ENCODE measurements at regions of chr1 and their contacts with region 1.

Region 1: DNA sequence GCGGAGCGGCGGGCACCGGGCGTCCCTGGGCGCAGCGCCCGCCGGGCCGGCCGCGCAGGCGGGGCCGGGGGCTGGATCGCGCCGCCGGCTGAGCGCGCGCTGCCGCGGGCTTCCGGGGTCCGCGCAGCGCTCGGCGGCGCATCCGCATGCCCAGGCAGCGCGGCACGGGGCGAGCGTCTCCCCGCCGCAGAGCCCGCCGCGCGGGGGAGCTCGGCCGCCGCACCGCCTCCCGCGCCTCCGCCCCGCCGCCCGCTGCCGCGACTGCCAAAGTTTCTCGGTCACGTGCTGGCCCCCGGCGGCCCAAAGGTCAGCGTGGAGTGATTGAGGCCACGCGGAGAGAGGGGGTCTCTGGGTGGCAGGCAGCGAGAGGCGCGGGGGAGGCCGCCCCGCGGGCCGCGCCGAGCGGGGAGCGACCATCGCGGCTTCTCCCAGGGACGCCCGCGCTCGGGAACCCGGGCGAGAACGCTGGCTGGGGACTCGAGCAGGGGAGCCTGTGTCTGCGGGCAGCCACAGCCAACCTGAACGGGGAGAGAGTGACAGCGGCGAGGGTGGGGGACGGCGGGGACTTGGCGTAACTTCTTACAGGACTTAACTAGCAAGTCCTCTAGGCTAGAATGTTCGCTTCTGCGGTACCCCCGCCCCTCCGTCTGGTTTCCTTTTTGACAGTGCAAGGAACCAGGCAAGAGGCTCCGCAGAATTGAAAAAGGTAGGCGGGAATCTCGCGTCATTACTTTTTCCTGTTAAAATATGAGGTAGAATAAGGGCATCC is at the start of gene ILDR2:
- DNase-seq: peak; percentile 41
- H3K4me3 Mint-ChIP-seq: peak within 1 kb of the TSS; percentile 94
- H3K27ac Mint-ChIP-seq: peak within 1 kb of the TSS; percentile 80
- H3K4me1 Mint-ChIP-seq: peaks cover 58% of the 10 kb centered on the region
- H3K27me3 Mint-ChIP-seq: peaks cover 28% of the 10 kb centered on the region
- total RNA-seq, gene ILDR2: 11.3 and 14.4 TPM in 2 replicates

Region 2: GRCh38 chr1:166838766-166839599 is 136.6 kb before region 1 on chr1 and contains the start of gene POGK:
- intact Hi-C with region 1: loop called (anchors 2 kb)
- DNase-seq: peak; percentile 84
- H3K4me3 Mint-ChIP-seq: peak within 1 kb of the TSS; percentile 94
- H3K27ac Mint-ChIP-seq: peak within 1 kb of the TSS; percentile 97
- H3K4me1 Mint-ChIP-seq: peaks cover 64% of the 10 kb centered on the region
- H3K27me3 Mint-ChIP-seq: no peaks in the 10 kb centered on the region
- total RNA-seq, gene POGK: 51.4 and 54.1 TPM in 2 replicates

Region 3: DNA sequence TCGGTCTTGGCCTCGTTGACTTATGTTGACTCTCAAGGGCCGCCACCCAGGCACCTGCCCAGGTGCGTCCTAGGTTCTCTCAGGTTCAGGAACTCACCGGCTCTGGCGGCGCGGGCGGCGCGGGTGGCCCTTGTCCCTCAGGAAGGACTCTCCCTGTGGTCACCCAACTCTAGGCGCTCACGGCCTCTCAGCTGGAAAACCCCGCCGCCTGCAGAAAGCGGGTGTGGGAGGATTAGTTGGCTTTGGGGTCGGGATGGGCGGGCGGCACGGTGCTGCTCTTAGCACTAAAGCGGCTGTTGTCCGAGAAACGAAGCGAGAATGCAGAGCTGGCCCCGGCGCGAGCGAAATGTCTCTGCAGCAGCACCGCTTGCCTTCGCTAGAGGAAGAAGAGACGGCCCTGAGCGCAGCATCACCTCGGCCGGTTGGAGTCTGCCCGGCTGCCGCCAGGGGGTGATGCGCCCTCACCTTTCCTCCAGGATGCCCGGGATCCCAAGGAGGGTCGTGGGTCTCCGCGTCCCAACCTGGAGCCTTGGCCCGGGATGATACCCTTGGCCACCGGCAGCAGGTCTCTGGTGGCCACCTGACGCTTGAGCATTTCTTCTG is 91.4 kb before region 1 on chr1:
- intact Hi-C with region 1: no loop called
- DNase-seq: no peak
- H3K4me3 Mint-ChIP-seq: no peak overlapping the region
- H3K27ac Mint-ChIP-seq: no peak overlapping the region
- H3K4me1 Mint-ChIP-seq: peaks cover 12% of the 10 kb centered on the region
- H3K27me3 Mint-ChIP-seq: peaks cover 17% of the 10 kb centered on the region

Region 4: DNA sequence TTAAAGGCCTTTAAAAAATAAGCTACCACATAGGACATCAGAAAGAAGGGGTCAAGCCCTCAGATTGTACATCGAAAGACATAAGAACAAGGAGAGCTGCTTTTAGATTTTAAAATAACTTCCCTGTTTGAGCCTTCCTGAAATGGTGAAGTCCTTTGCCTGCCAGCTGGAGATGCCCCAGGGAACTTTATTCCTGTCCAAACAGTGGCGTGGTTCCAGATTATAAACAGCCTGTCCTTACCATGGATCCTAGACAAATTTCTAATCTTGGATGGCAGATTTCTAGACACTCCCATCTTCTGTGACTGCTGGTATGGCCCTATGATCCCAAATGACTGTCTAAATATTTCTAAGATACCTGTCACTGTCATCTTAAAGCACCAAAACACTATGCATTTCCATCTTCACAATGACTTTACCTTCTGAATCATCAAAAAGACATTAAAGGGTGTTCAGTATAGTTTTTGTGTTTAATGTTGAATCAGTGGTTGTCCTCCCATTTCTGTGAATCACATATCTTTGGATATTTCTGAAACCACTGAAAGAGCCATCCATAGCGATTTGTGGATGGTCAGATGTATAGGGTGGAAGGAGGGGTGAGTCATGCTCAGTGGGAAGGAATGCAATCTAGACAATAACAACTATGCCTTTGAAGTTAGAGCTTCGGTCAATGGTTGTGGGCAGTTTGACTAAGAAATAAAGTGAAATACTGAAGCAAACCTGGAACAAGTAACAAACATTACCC is 23.4 kb before region 1 on chr1:
- intact Hi-C with region 1: loop called (anchors 1 kb)
- DNase-seq: no peak
- H3K4me3 Mint-ChIP-seq: no peak overlapping the region
- H3K27ac Mint-ChIP-seq: peak overlapping the region; percentile 13
- H3K4me1 Mint-ChIP-seq: peaks cover 19% of the 10 kb centered on the region
- H3K27me3 Mint-ChIP-seq: peaks cover 21% of the 10 kb centered on the region

Region 5: DNA sequence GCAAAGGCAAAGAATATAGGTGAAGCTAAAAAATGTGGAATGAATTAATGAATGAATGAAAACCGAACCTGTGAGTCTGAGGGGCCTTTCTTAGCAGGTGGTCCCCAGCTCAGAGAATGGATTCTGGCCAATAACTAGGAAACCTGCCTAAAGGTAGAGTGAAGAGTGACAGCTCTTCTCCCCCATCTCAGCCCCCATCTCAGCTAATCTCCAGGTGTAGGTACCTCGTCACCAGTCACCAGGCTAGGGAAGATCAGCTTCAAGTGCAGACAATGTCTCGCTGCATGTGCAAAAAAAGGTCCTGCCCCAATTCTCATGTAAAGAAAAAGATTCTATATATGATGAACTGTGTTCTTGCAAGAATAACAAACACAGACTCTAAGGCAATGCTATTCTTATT is 11.1 kb before region 1 on chr1:
- intact Hi-C with region 1: loop called (anchors 1 kb)
- DNase-seq: no peak
- H3K4me3 Mint-ChIP-seq: no peak overlapping the region
- H3K27ac Mint-ChIP-seq: no peak overlapping the region
- H3K4me1 Mint-ChIP-seq: peaks cover 10% of the 10 kb centered on the region
- H3K27me3 Mint-ChIP-seq: peaks cover 11% of the 10 kb centered on the region

Region 6: GRCh38 chr1:166999500-167000055 is 24.0 kb after region 1 on chr1:
- intact Hi-C with region 1: no loop called
- DNase-seq: no peak
- H3K4me3 Mint-ChIP-seq: no peak overlapping the region
- H3K27ac Mint-ChIP-seq: no peak overlapping the region
- H3K4me1 Mint-ChIP-seq: peaks cover 16% of the 10 kb centered on the region
- H3K27me3 Mint-ChIP-seq: peaks cover 9% of the 10 kb centered on the region

Region 7: GRCh38 chr1:167033646-167034045 is 58.1 kb after region 1 on chr1:
- intact Hi-C with region 1: no loop called
- DNase-seq: no peak
- H3K4me3 Mint-ChIP-seq: no peak overlapping the region
- H3K27ac Mint-ChIP-seq: no peak overlapping the region
- H3K4me1 Mint-ChIP-seq: no peaks in the 10 kb centered on the region
- H3K27me3 Mint-ChIP-seq: peaks cover 7% of the 10 kb centered on the region

Region 8: DNA sequence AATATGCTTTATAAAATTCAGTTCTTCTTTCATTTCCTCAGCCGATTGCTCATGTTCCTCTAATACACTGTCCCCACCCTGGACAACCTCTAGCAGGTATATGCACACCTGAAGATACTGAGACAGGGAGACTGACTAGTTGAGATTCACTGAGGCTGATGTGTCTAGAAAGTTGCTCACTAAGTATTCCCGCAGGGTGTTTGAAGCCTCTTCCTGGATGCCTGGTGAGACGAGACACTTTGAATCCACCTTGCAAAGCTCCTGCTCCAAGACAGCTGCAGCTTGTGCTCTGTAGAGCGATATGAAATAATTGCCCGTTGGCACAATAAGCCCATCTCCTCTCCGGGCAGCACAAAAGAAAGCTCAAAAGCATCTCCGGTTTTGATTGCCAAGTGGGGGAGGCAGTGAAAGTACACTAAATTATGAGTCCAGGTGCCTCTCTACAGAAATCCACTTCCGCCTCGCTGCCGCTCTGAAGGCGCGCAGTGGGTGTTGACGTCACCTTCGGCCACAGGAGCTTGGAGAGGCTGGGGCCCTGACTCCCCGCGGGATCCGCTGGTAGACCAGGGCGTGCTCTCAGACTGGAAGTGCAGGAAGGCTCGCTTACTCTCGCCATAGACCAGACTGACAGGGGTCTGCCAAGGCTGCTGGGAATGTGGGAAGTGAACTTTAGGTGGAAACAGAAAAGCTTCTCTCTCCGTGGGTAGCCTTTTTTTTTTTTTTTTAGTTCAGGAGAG is 68.4 kb after region 1 on chr1:
- intact Hi-C with region 1: loop called (anchors 5 kb)
- DNase-seq: peak; percentile 65
- H3K4me3 Mint-ChIP-seq: peak overlapping the region; percentile 79
- H3K27ac Mint-ChIP-seq: no peak overlapping the region
- H3K4me1 Mint-ChIP-seq: peaks cover 19% of the 10 kb centered on the region
- H3K27me3 Mint-ChIP-seq: peaks cover 29% of the 10 kb centered on the region

Region 9: DNA sequence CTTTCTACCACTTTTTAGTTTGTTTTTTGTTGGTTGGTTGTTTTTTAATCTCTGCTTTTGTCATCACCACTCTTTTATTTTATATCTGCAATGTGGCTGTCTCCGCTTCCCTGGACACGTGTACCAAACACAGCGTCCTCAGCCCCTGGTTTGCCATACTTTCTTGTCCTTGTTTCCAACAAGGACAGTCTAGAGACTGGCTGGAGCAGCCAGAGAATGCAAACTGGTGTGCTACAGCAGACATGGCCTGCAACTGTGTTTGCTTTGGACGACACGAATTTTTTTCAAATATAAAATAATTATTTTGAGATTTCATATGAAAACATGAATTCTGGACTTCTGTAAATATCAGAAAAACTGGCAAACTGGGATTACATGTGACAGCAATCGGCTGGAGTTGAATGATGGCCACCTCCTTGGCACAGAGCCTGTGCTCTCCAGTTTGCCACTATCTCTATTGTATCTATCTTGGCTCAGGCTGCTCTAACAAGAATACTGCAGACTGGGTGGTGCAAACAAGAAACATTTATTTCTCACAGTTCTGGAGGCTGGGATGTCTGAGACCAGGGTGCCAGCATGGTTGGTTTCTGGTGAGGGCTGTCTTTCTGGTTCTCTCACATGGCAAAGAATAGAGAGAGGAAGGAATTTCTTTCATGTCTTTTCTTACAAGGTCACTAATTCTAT is 210.6 kb after region 1 on chr1:
- intact Hi-C with region 1: no loop called
- DNase-seq: no peak
- H3K4me3 Mint-ChIP-seq: no peak overlapping the region
- H3K27ac Mint-ChIP-seq: no peak overlapping the region
- H3K4me1 Mint-ChIP-seq: no peaks in the 10 kb centered on the region
- H3K27me3 Mint-ChIP-seq: peaks cover 15% of the 10 kb centered on the region